SK-N-SH (cell line): ENCODE measurements at regions of chr20 and their contacts with region 1.

Region 1: DNA sequence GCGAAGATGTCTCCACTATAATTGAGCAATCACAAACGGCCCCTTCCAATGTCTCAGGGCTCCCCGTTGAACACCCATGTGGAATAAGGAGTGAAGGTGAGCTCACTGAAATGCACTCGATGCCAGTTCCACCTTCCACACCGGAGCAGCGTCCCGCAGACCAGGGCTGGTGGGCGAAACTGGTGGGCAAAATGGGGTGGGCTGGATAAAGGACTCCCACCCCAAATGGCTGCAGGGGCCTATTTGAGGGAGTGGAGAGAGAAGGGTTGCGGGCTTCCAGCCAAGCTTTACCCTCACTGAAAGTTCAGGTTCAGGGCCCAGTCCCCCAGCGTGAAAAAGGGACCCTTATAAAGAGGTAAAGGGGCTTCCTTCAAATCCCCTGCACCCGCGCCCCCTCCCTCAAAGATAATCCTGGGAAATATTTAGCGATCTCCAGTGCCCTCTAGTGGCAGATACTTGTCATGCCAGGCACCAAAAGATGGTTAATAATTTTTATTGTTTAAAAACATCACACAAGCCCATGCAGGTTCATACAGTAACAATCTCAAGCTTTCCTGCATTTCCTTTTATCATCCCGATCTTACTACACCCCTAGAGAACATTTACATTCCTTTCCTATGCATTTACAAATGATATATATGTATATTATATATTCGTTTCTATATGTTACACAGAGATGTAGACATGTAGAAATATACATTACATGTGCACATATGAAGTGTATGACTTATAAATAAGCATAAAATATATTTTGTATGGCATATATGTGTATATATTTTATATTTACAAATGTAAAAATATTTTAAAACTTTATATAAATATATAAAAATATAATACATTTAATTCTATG is 58.2 kb upstream of the NKX2-2 start:
- DNase-seq: peak; percentile 35
- H3K4me3 ChIP-seq: no peak overlapping the region; a peak in 1 of 4 replicates
- H3K27ac ChIP-seq: no peak overlapping the region
- H3K4me1 ChIP-seq: no peaks in the 10 kb centered on the region; a peak in 1 of 4 replicates
- H3K27me3 ChIP-seq: peaks cover 51% of the 10 kb centered on the region; the same call in 1 of the 2 replicates
- CTCF ChIP-seq: peak; percentile 93
- EP300 ChIP-seq: no peak
- RAD21 ChIP-seq: peak; percentile 65

Region 2: DNA sequence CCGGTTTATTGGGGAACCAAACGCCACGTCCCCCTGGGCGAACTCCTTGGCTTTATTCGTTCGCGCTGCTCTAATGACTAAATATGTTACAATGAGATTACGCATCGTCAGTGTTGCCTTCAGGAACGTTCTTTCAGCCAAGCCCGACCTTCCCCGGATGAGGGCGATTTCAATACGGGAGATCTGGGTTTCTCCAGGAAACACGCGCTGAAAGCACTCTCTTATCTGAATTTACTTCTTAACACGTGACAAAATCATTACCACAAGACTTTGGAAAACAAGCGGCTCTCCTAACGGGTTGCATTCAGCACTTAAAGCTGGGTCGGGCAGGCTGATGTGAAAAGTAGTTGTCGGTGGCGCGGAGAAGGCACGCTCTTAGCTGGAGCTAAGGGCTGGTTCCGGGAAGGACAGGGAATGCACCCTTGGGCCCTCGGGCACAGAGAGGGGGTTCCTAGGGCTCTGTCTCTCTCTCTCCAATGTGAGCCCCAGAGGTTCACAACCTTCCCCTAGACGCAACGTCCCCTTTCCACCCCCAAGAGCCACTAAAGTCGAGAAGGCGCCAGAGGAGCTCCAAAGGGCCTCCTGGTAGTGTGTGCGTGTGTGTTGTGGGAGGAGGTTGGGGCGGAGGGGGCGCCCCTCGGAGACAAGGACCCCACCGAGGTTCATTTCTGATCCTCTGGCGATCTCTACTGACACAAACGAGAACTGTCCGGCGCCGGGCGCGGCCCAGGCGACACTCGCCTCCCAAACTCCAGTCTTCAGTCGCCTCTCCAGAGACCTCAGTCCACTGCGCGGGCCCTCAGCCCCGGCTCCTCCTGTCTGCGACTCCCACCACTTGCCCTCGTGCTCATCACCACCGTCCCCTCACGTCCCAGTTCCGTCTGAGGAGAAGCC is 51.1 kb before region 1 on chr20:
- CTCF ChIA-PET with region 1: interaction called, 10 read pairs
- POLR2A ChIA-PET with region 1: no interaction called
- DNase-seq: peak; percentile 10
- H3K4me3 ChIP-seq: no peak overlapping the region
- H3K27ac ChIP-seq: no peak overlapping the region
- H3K4me1 ChIP-seq: no peaks in the 10 kb centered on the region
- H3K27me3 ChIP-seq: peaks cover 92% of the 10 kb centered on the region
- CTCF ChIP-seq: 0 out of 2 replicates have a peak, but pooled peaks have one; percentile 12
- EP300 ChIP-seq: no peak
- RAD21 ChIP-seq: no peak

Region 3: GRCh38 chr20:21559305-21559704 is 12.8 kb before region 1 on chr20:
- CTCF ChIA-PET with region 1: interaction called, 13 read pairs
- POLR2A ChIA-PET with region 1: no interaction called
- DNase-seq: no peak
- H3K4me3 ChIP-seq: no peak overlapping the region
- H3K27ac ChIP-seq: no peak overlapping the region
- H3K4me1 ChIP-seq: no peaks in the 10 kb centered on the region
- H3K27me3 ChIP-seq: peaks cover 40% of the 10 kb centered on the region
- CTCF ChIP-seq: no peak
- EP300 ChIP-seq: no peak
- RAD21 ChIP-seq: no peak

Region 4: DNA sequence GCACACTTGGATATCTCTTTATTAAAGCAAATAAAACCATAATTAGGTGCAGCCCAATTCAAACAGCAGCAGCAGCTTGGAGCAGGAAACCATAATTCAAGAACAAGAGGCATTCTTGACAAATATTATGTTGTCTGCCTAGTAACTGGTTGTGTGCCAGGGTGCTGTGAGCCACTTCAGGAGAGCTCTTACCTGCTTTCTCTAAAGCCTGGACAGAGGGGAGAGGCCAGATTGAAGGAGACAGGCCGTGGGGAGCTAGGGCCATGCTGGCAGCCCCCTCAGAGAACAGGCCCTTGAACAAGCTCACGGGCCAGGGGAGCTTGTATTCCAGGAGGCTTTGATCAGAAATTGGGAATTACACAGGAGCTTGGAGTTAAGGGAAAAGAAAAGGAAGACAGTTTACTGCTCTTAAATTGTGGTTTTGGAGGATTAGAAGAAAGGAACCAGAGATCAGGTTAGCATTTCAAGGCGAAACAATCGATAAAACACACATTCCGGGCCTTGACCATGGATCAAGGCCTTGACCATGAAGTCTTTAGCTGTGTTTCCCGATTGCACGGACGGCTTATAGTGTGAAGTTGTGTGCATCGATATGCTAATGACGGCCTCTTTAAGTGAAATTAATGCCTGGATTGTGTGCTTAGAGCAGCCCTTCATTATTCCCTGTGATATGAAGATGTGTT is 11.6 kb after region 1 on chr20:
- CTCF ChIA-PET with region 1: interaction called, 12 read pairs
- POLR2A ChIA-PET with region 1: no interaction called
- DNase-seq: no peak
- H3K4me3 ChIP-seq: no peak overlapping the region
- H3K27ac ChIP-seq: no peak overlapping the region
- H3K4me1 ChIP-seq: no peaks in the 10 kb centered on the region; a peak in 1 of 4 replicates
- H3K27me3 ChIP-seq: peaks cover 37% of the 10 kb centered on the region; the same call in 1 of the 2 replicates
- CTCF ChIP-seq: no peak
- EP300 ChIP-seq: no peak
- RAD21 ChIP-seq: no peak

Region 5: GRCh38 chr20:21682521-21682954 is 110.5 kb after region 1 on chr20:
- CTCF ChIA-PET with region 1: no interaction called
- POLR2A ChIA-PET with region 1: no interaction called
- DNase-seq: no peak
- H3K4me3 ChIP-seq: no peak overlapping the region
- H3K27ac ChIP-seq: no peak overlapping the region
- H3K4me1 ChIP-seq: no peaks in the 10 kb centered on the region; a peak in 2 of 4 replicates
- H3K27me3 ChIP-seq: peaks cover 9% of the 10 kb centered on the region; the same call in 1 of the 2 replicates
- CTCF ChIP-seq: no peak
- EP300 ChIP-seq: no peak
- RAD21 ChIP-seq: no peak